Heart right ventricle (tissue), 16 donors: ENCODE measurements at regions of chr6 and their contacts with region 1.

Region 1: GRCh38 chr6:89352278-89353117 is at the start of gene UBE2J1:
- DNase-seq: peak; percentile 95 to 97
- ATAC-seq: peak; percentile 94 to 98 (median 96)
- H3K4me3 ChIP-seq: peak within 1 kb of the TSS; percentile 66 to 95 (median 83)
- H3K27ac ChIP-seq: peak within 1 kb of the TSS; percentile 93 to 100 (median 98)
- H3K4me1 ChIP-seq: peaks cover 16 to 61% (median 49%) of the 10 kb centered on the region in 9 donors
- H3K27me3 ChIP-seq: no peaks in the 10 kb centered on the region
- CTCF ChIP-seq: peak in 1 of 9 donors; percentile 5
- total RNA-seq, gene UBE2J1: 9.9 to 23.9 (median 14.1) TPM

Region 2: GRCh38 chr6:89311853-89312531 is 40.5 kb before region 1 on chr6:
- intact Hi-C with region 1: loop called in 6 of 10 experiments (anchors 5 kb)
- DNase-seq: peak; percentile 55 to 67
- ATAC-seq: peak; percentile 53 to 86 (median 80)
- H3K4me3 ChIP-seq: peak overlapping the region in 5 of 10 donors; percentile 23 to 36 (median 28)
- H3K27ac ChIP-seq: peak overlapping the region; percentile 49 to 85 (median 68)
- H3K4me1 ChIP-seq: peaks cover 15 to 40% (median 28%) of the 10 kb centered on the region in 9 donors
- H3K27me3 ChIP-seq: no peaks in the 10 kb centered on the region
- CTCF ChIP-seq: peak in 8 of 9 donors; percentile 50 to 78 (median 64)